ENCODE measurements at regions of chr1 and their contacts with region 1.

Region 1: DNA sequence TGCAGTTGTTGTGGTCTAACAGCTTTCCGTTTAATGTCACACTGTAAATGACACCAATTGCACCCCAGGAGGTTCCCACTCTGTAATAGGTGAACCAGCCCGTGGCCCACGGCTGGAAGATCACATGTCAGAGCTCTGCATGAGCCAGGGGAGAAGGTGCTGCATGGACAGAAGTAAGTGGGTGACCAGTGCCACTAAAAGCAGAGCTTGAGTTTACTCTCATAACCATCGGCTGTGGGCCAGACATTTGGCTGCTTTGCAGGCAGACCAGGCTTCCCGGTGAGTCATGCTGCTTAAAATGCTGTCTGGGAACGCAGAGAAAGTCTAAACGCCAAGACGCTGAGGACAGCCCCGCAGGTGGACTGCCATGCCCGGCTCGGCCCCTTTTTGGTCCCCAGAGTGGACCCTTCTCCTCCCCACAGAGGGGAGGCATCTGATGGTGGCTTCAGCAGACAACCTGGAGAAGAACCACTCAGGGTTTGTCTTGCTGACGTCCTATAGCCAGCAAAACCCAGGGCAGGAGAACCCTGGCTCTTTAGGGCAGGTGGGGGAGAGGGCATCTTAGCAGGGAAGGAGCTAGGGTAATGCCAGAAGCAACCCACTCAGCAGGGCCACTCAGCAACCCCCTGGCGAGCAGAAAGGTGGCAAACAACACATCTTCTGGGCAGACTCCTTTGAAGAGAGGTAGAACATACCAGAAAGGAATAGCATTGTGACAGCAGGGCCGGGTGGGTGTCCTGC is 7.3 kb downstream of the KIAA2013 start:
- DNase-seq: no peak
- ATAC-seq: no peak
- H3K4me3 Mint-ChIP-seq: no peak overlapping the region
- H3K27ac Mint-ChIP-seq: no peak overlapping the region
- H3K4me1 Mint-ChIP-seq: peaks cover 33% of the 10 kb centered on the region
- H3K27me3 Mint-ChIP-seq: no peaks in the 10 kb centered on the region
- CTCF ChIP-seq: no peak

Region 2: GRCh38 chr1:11661103-11661502 is 257.8 kb before region 1 on chr1:
- CTCF ChIA-PET with region 1: no interaction called
- POLR2A ChIA-PET with region 1: interaction called, 11 read pairs
- intact Hi-C with region 1: no loop called
- DNase-seq: no peak
- ATAC-seq: no peak
- H3K4me3 Mint-ChIP-seq: no peak overlapping the region
- H3K27ac Mint-ChIP-seq: no peak overlapping the region
- H3K4me1 Mint-ChIP-seq: no peaks in the 10 kb centered on the region
- H3K27me3 Mint-ChIP-seq: no peaks in the 10 kb centered on the region
- CTCF ChIP-seq: no peak

Measured in activated B cell treated with CpG ODN at 0.5 μM for 24 hours (primary cell).